Activated CD4-positive, alpha-beta memory T cell treated with anti-CD3 and anti-CD28 coated beads for 36 hours (primary cell): ENCODE measurements at regions of chr2 and their contacts with region 1.

Region 1: GRCh38 chr2:190695739-190696138 is 46.9 kb downstream of the NAB1 start:
- DNase-seq: peak; percentile 61
- H3K4me3 Mint-ChIP-seq: no peak overlapping the region
- H3K27ac Mint-ChIP-seq: peak overlapping the region; percentile 44
- H3K4me1 Mint-ChIP-seq: peaks cover 42% of the 10 kb centered on the region
- H3K27me3 Mint-ChIP-seq: no peaks in the 10 kb centered on the region

Region 2: GRCh38 chr2:190707726-190708125 is 12.0 kb after region 1 on chr2:
- CTCF ChIA-PET with region 1: interaction called, 4 read pairs
- POLR2A ChIA-PET with region 1: no interaction called
- intact Hi-C with region 1: loop called (anchors 1 kb)
- DNase-seq: no peak
- H3K4me3 Mint-ChIP-seq: no peak overlapping the region
- H3K27ac Mint-ChIP-seq: peak overlapping the region; percentile 50
- H3K4me1 Mint-ChIP-seq: peaks cover 41% of the 10 kb centered on the region
- H3K27me3 Mint-ChIP-seq: no peaks in the 10 kb centered on the region

Region 3: DNA sequence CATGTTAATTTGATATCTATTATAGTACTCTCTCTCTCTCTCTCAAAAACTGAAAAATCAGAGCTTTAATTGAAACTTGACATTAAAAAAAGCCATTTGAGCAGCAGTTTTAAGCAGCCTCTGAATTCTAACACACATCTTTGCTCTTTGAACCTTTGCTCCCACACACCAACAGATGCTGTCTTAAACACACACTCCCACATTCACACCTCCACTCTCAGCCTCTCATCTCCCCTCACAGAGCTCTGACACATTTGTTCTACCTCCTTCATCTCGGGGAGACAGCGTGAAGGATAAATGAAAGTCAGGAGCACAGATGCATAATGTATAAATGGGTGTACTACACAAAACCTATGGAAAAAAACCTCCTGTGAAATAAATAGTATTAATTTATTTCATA is 48.3 kb after region 1 on chr2:
- CTCF ChIA-PET with region 1: no interaction called
- POLR2A ChIA-PET with region 1: no interaction called
- intact Hi-C with region 1: no loop called
- DNase-seq: no peak
- H3K4me3 Mint-ChIP-seq: no peak overlapping the region
- H3K27ac Mint-ChIP-seq: no peak overlapping the region
- H3K4me1 Mint-ChIP-seq: peaks cover 22% of the 10 kb centered on the region
- H3K27me3 Mint-ChIP-seq: no peaks in the 10 kb centered on the region

Region 4: GRCh38 chr2:190781604-190782198 is 86.0 kb after region 1 on chr2:
- CTCF ChIA-PET with region 1: no interaction called
- POLR2A ChIA-PET with region 1: no interaction called
- intact Hi-C with region 1: no loop called
- DNase-seq: peak; percentile 66
- H3K4me3 Mint-ChIP-seq: no peak overlapping the region
- H3K27ac Mint-ChIP-seq: no peak overlapping the region
- H3K4me1 Mint-ChIP-seq: peaks cover 22% of the 10 kb centered on the region
- H3K27me3 Mint-ChIP-seq: peaks cover 9% of the 10 kb centered on the region

Region 5: DNA sequence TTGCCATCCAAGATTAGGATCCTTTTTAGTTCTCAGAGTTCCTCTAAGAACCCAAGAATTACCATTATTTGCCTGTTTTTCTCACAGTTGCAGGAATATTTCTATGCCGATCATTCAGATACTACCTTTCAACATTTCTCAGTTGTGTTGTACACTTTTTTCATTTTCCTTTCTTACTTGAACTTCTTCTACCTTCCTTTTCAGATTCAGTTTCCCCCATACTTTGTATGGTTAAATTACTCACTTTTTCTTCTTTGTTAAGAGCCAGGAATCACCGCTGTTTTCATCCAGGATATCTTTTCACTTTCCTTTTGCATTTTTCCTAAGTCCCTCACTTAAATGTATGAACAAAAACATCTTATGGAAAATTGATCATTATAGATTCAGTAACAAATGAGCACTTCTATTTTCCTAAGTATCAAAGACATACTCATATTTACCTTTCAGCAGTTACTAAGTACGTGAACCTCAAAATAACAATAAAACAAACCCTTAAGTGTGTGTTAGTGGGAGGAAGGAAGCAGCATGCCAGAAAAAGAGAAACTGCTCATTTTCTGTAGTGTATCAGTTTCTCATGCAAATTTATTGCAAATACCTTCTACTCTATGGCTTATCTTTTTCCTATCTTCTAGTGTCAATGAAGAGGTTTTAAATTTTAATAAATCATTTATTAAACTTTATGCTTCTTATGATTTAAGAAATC is 382.6 kb after region 1 on chr2:
- CTCF ChIA-PET with region 1: no interaction called
- POLR2A ChIA-PET with region 1: no interaction called
- intact Hi-C with region 1: no loop called
- DNase-seq: no peak
- H3K4me3 Mint-ChIP-seq: peak overlapping the region; percentile 48
- H3K27ac Mint-ChIP-seq: peak overlapping the region; percentile 69
- H3K4me1 Mint-ChIP-seq: peaks cover 29% of the 10 kb centered on the region
- H3K27me3 Mint-ChIP-seq: no peaks in the 10 kb centered on the region